ENCODE measurements at regions of chr11 and their contacts with region 1.

Region 1: DNA sequence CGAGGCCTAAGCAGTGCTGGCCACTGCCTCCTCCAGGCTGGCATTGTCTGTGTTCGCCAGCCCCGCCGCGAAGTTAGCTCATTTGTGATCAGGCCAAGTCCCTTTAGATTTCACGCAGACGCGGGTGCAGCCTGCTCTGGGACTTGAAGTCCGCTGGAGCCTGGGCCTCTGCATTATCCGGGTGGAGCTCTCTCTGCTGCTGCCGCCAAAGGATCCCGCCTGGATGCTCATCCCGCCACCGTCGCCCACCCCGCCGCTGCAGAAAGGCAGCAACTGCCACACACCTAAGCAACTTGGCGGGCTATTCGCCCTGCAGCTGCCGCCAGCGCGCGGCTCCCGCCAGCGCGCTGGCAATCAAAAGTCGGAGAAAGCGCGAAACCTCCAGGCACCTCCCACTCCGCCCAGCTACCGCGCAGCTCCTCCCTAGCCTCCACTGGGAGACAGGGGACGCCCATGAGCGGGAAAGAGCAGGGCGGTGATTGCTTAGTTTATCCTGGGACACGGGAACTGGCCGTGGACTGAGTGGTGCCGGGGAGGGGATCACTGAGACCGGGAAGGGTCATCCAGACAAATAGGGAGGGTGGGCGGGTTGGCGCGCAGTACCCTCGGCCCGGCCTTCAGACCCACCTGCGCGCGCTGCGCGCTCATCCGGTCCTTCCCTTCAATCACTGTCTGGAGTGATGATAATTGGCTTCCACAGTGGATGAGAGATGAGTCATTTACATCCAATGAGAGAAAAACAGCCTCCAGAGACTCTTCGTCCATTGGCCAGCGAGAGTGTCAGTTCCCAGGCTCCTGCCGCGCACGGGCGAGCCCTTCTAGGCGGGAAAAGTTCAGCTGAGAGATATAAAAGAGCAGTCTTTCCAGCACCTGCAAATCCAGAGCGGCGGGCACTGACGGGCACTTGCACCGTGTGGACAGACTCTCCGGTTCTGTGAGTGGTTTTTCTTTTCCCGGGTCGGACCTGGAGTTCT is at the start of gene FAM111B:
- DNase-seq: peak; percentile 74 to 90
- ATAC-seq: peak; percentile 92 to 98 (median 96)
- H3K4me3 ChIP-seq: peak within 1 kb of the TSS; percentile 1 to 74 (median 58)
- H3K27ac ChIP-seq: peak within 1 kb of the TSS in 2 of 10 donors; percentile 31 to 45
- H3K4me1 ChIP-seq: peaks cover 0 to 25% (median 7%) of the 10 kb centered on the region in 9 donors
- H3K27me3 ChIP-seq: peaks cover 0 to 39% (median 18%) of the 10 kb centered on the region in 7 donors
- CTCF ChIP-seq: peak in 3 of 9 donors; percentile 21 to 31 (median 24)
- total RNA-seq, gene FAM111B: 0.11 to 3.1 (median 0.30) TPM in 8 of 10 donors, not detected in the others

Region 2: DNA sequence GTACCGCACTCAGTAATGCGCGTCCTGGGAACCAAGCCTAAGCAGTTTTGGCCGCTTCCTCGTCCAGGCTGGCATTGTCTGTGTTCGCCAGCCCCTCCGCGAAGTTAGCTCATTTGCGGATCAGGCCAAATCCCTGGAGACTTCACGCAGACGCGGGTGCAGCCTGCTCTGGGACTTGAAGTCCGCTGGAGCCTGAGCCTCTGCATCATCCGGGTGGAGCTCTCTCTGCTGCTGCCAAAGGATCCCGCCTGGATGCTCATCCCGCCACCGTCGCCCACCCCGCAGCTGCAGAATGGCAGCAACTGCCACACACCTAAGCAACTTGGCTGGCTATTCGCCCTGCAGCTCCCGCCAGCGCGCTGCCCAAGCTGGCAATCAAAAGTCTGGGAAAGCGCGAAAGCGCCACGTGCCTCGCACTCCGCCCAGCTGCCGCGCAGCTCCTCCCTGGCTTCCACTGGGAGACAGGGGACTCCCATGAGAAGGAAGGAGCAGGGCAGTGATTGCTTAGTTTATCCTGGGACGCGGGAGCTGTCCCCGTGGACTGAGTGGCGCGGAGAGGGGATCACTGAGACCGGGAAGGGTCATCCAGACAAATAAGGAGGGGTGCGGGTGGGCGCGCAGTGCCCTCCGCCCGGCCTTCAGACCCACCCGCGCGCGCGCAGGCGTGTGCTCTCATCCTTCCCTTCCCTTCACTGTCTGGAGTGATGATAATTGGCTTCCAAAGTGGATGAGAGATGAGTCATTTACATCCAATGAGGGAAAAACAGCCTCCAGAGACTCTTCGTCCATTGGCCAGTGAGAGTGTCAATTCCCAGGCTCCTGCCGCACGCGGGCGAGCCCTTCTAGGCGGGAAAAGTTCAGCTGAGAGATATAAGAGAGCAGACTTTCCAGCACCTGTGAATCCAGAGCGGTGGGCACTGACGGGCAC is 43.8 kb before region 1 on chr11:
- intact Hi-C with region 1: loop called in 1 of 10 experiments (anchors 2 kb)
- DNase-seq: no peak
- ATAC-seq: no peak
- H3K4me3 ChIP-seq: no peak overlapping the region
- H3K27ac ChIP-seq: no peak overlapping the region
- H3K4me1 ChIP-seq: peaks cover 0 to 2% (median 0%) of the 10 kb centered on the region in 9 donors
- H3K27me3 ChIP-seq: peaks cover 0 to 85% (median 47%) of the 10 kb centered on the region in 7 donors
- CTCF ChIP-seq: no peak

Region 3: DNA sequence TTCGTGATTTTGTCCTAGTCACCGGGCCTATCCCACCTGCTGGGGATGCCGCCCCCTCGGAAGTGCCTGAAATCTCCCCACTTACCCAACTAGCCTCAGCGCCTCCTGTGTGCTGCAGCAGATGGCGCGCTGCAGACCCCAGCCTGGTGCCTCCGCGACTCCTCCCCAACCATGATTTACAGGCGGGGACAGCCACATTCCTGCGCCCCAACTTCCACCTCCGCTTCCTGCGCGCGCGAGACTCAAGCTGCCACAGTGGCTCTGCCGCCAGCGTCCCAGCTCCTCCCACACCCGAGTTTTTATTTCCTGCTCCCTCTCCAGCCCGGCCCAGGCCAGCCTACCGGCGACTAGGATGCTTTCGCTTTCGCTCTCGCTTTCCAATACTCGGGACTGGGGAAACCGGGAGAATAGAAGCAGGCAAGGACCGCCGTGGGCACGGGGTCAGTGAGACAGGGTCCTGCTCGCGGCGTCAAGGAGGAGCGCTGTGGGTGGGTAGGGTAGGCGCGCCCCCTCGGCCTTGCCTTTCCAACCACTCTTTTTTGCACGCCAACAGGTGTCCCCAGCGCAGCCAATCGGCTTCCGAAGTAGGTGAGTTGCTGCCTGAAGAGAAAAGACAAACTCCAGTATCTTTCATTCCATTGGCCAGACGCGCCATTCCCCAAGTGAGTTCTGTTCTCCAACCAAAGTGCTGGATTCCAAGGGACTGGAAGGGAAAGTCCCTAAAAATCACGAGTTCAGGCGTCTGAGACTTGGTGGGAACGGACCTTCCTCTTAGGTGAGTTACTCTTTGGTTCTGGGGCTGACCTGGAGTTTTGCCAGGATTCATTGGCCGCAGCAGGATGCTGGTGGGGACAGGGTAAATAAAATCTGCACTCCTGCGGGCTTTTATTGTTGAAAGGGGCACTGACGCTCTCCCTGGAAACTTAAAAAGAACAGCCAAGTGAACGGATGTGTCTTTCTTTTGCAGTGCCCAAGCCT is 36.2 kb after region 1 on chr11 and contains the start of gene FAM111A:
- intact Hi-C with region 1: loop called in 4 of 10 experiments (anchors 2 to 5 kb)
- DNase-seq: peak; percentile 86 to 90
- ATAC-seq: peak; percentile 93 to 97 (median 96)
- H3K4me3 ChIP-seq: peak within 1 kb of the TSS; percentile 20 to 86 (median 70)
- H3K27ac ChIP-seq: peak within 1 kb of the TSS; percentile 44 to 94 (median 87)
- H3K4me1 ChIP-seq: peaks cover 0 to 48% (median 25%) of the 10 kb centered on the region in 9 donors
- H3K27me3 ChIP-seq: no peaks in the 10 kb centered on the region
- CTCF ChIP-seq: peak in 6 of 9 donors; percentile 5 to 52 (median 26)
- total RNA-seq, gene FAM111A: 4.0 to 18.6 (median 5.1) TPM

Measured in heart right ventricle (tissue), 16 donors.